Activated T-helper 1 cell treated with anti-CD3 and anti-CD28 coated beads, Interleukin-12 subunit alpha, Interleukin-12 subunit beta, Interleukin-2, Interleukin-4 antibody, amounts not matched to agents 30 ng/mL and 10 ng/mL and 1 ng/mL, durations not matched to agents 14 hours and 24 hours and 36 hours (primary cell): ENCODE measurements at regions of chr1 and their contacts with region 1.

Region 1: DNA sequence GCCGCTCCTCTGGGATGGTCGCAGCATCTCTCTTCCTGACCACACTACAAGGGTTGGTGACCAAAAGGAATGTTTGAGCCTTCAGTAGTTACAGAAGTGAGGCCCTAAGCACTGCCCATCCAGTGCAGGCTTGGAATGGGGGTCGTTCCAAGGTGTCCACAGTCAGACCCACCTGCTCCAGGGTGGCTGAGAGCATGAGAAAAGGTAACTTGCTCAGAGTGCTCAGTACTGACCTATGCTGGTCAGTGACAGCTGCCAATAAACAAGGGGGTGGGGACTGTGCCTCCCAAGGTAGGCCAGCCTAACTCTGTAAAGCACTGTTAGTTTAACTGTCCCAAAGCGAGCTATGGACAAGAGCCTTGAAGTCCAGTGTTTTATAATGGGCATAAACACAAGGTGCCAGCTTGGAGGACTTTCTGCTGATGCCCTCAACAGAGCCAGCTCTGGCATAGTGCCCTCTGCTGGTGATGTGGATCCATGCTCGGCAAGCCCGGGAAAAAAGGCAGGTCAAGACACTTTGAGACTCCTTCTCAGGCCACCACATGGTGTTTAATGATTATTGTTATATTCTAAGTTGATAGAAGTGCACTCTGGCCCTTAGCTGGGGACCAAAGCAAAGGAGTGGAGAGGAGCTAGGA is 78.1 kb upstream of the DNAH14 start:
- DNase-seq: peak; percentile 34
- H3K4me3 Mint-ChIP-seq: no peak overlapping the region
- H3K27ac Mint-ChIP-seq: no peak overlapping the region
- H3K4me1 Mint-ChIP-seq: no peaks in the 10 kb centered on the region
- H3K27me3 Mint-ChIP-seq: peaks cover 10% of the 10 kb centered on the region

Region 2: GRCh38 chr1:224644553-224645154 is 206.7 kb before region 1 on chr1:
- intact Hi-C with region 1: loop called (anchors 1 kb)
- DNase-seq: peak; percentile 48
- H3K4me3 Mint-ChIP-seq: no peak overlapping the region
- H3K27ac Mint-ChIP-seq: no peak overlapping the region
- H3K4me1 Mint-ChIP-seq: no peaks in the 10 kb centered on the region
- H3K27me3 Mint-ChIP-seq: peaks cover 7% of the 10 kb centered on the region

Region 3: GRCh38 chr1:224700915-224701531 is 150.3 kb before region 1 on chr1:
- intact Hi-C with region 1: loop called (anchors 1 kb)
- DNase-seq: no peak
- H3K4me3 Mint-ChIP-seq: no peak overlapping the region
- H3K27ac Mint-ChIP-seq: no peak overlapping the region
- H3K4me1 Mint-ChIP-seq: no peaks in the 10 kb centered on the region
- H3K27me3 Mint-ChIP-seq: no peaks in the 10 kb centered on the region

Region 4: DNA sequence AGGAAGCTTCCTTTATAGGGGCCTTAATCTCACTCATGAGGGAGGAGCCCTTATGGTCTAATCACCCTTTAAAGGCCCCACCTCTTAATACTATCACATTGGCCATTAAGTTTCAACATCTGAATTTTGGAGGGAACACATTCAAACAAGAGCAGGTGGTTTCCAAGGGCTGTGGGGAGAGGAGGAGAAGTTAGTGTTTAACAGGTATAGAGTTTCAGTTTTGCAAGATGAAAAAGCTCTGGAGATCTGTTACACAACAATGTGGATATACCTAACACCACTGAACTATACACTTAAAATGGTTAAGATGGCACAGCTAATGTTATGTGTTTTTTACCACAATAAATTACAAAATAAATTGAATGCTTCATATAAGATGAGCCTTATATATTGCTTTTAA is 35.3 kb before region 1 on chr1:
- intact Hi-C with region 1: no loop called
- DNase-seq: no peak
- H3K4me3 Mint-ChIP-seq: no peak overlapping the region
- H3K27ac Mint-ChIP-seq: no peak overlapping the region
- H3K4me1 Mint-ChIP-seq: no peaks in the 10 kb centered on the region
- H3K27me3 Mint-ChIP-seq: peaks cover 5% of the 10 kb centered on the region

Region 5: DNA sequence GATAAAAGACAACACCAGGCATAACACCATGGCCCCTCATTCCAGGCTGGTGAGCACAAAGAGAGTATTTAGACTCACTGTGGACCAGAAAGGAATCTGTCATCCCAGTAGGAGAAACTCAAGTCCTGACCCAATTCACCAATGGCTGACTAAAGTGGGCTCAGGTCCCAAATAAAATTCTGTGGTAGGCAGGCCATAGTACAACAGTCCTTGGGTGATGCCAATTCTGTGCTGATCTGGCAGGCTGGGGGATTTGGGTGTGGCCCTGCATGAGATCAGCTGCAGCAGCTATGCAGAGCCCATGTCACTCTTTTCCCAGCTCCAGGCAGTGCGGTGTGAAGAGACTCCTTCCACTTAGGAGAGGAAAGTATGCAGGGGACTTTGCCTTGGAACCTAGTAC is 331.4 kb after region 1 on chr1:
- intact Hi-C with region 1: no loop called
- DNase-seq: no peak
- H3K4me3 Mint-ChIP-seq: no peak overlapping the region
- H3K27ac Mint-ChIP-seq: no peak overlapping the region
- H3K4me1 Mint-ChIP-seq: peaks cover 8% of the 10 kb centered on the region
- H3K27me3 Mint-ChIP-seq: peaks cover 2% of the 10 kb centered on the region